ENCODE measurements at regions of chr1 and their contacts with region 1.

Region 1: DNA sequence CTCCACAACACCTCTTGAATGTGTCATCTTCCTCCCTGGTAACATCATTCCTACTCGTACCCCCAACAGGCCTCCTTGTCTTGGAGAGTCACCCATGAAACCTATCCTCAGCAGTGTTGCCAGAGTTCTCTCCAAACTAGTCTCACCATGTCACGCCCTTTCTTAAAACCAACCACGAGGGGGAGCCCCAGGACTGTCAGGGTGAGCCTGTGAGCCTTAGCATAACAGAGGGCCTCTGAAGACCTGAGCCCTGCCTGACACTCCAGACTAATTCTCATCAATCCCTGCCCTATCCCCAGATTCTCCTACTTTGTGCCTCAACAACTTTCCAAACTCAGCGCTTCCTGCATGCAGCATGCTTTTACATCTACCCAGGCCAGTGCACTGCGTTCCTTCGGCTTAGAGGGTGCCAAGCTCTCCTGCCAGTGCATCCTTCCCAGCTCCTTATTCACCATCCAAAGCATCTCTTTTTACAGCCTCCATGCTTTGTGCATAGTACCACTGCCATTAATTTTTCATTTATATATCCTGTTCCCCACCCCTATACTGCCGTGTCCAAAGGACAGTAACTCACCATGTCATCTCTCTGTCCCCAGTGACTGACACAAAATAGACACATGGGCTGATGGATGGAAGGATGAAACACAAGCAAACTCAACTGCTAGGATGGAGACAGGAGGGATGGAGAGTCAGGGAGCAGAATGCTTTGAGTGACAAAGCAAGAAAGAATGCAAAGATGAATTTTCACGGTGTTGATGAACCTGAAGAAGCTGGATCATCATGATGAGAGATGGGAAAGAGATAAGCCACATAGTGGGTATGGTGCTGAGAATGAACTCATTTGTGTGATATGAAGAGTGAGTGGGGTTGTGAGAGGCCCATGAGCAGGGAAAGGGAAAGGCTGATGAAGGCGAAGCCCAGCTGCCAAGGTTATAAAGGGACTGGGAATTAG is 34.0 kb downstream of the ZNF697 start:
- DNase-seq: peak; percentile 86
- H3K4me3 ChIP-seq: no peak overlapping the region
- H3K27ac ChIP-seq: no peak overlapping the region
- H3K4me1 ChIP-seq: no peaks in the 10 kb centered on the region
- H3K27me3 ChIP-seq: no peaks in the 10 kb centered on the region
- CTCF ChIP-seq: peak; percentile 60 to 72
- POLR2A ChIP-seq: no peak

Region 2: GRCh38 chr1:118563971-118564951 is 1049.8 kb before region 1 on chr1:
- CTCF ChIA-PET with region 1: no interaction called
- POLR2A ChIA-PET with region 1: no interaction called
- dilution Hi-C with region 1: no loop called
- intact Hi-C with region 1: no loop called
- DNase-seq: no peak
- H3K4me3 ChIP-seq: no peak overlapping the region
- H3K27ac ChIP-seq: no peak overlapping the region
- H3K4me1 ChIP-seq: no peaks in the 10 kb centered on the region
- H3K27me3 ChIP-seq: no peaks in the 10 kb centered on the region
- CTCF ChIP-seq: no peak
- POLR2A ChIP-seq: no peak

Region 3: GRCh38 chr1:119582801-119583200 is 31.2 kb before region 1 on chr1:
- CTCF ChIA-PET with region 1: interaction called, 7 read pairs
- POLR2A ChIA-PET with region 1: no interaction called
- dilution Hi-C with region 1: no loop called
- intact Hi-C with region 1: loop called (anchors 2 kb)
- DNase-seq: peak; percentile 62
- H3K4me3 ChIP-seq: no peak overlapping the region
- H3K27ac ChIP-seq: no peak overlapping the region
- H3K4me1 ChIP-seq: no peaks in the 10 kb centered on the region
- H3K27me3 ChIP-seq: no peaks in the 10 kb centered on the region
- CTCF ChIP-seq: peak; percentile 54 to 67
- POLR2A ChIP-seq: no peak

Region 4: DNA sequence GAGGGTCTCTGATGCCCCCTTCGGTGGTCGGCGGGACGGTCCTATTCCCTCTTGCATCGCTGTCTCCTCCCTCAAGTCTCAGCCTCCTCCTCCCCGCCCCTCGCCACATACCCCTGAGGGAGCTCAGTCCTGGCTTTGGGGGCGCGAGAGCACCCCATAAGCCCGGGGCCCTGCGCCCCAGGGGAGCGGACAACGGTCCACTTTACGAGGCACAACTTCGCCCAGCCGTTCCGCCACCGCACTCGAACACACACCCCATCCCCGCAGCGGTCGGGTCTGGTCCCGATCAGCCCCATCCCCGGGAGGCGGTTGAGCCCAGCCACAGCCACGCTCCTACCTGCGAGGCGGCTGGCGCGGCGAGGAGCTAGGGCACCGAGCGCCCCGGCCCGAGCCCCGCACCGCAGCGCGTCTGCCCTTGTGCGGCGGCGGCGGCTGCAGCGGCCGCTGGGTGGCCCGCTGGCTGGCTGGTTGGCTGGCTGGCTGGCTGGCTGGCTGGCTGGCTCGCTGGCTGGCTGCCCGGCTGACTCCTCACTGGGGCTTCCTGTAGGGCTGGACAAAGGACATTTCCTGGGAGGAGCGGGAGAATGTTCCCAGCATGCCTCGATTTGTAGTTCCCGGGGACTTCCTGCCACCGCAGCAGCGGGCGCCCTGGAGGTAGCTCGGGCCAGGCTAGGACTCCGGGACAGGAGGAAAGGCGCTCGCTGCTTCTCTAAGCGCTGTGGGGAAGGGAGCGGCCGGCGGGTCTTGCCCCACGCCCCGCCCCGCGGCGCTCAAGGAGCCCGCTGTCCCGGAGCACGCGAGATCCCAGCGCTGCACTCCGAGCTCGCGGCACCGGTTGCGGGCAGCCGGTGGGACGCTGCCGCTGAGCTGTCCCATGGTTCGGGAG is 33.9 kb after region 1 on chr1 and contains the start of gene ZNF697:
- CTCF ChIA-PET with region 1: interaction called, 86 read pairs
- POLR2A ChIA-PET with region 1: interaction called, 11 read pairs
- dilution Hi-C with region 1: no loop called
- intact Hi-C with region 1: loop called (anchors 1 kb)
- DNase-seq: peak; percentile 98
- H3K4me3 ChIP-seq: peak within 1 kb of the TSS; percentile 53 to 99 (median 70)
- H3K27ac ChIP-seq: peak within 1 kb of the TSS; percentile 91
- H3K4me1 ChIP-seq: peaks cover 29% of the 10 kb centered on the region
- H3K27me3 ChIP-seq: peaks cover 0 to 3% of the 10 kb centered on the region in 2 experiments
- CTCF ChIP-seq: peak in 1 of 2 donors; percentile 71
- POLR2A ChIP-seq: peak; percentile 85
- total RNA-seq, gene ZNF697: 14.1 and 15.0 TPM in 2 replicates

Region 5: GRCh38 chr1:119675349-119676345 is 61.6 kb after region 1 on chr1:
- CTCF ChIA-PET with region 1: interaction called, 163 read pairs
- POLR2A ChIA-PET with region 1: interaction called, 4 read pairs
- dilution Hi-C with region 1: no loop called
- intact Hi-C with region 1: loop called (anchors 1 kb)
- DNase-seq: peak; percentile 92
- H3K4me3 ChIP-seq: peak overlapping the region; percentile 32 to 86 (median 66)
- H3K27ac ChIP-seq: peak overlapping the region; percentile 78
- H3K4me1 ChIP-seq: peaks cover 42% of the 10 kb centered on the region
- H3K27me3 ChIP-seq: peaks cover 4 to 6% of the 10 kb centered on the region in 2 experiments
- CTCF ChIP-seq: peak; percentile 64 to 77
- POLR2A ChIP-seq: no peak

Region 6: DNA sequence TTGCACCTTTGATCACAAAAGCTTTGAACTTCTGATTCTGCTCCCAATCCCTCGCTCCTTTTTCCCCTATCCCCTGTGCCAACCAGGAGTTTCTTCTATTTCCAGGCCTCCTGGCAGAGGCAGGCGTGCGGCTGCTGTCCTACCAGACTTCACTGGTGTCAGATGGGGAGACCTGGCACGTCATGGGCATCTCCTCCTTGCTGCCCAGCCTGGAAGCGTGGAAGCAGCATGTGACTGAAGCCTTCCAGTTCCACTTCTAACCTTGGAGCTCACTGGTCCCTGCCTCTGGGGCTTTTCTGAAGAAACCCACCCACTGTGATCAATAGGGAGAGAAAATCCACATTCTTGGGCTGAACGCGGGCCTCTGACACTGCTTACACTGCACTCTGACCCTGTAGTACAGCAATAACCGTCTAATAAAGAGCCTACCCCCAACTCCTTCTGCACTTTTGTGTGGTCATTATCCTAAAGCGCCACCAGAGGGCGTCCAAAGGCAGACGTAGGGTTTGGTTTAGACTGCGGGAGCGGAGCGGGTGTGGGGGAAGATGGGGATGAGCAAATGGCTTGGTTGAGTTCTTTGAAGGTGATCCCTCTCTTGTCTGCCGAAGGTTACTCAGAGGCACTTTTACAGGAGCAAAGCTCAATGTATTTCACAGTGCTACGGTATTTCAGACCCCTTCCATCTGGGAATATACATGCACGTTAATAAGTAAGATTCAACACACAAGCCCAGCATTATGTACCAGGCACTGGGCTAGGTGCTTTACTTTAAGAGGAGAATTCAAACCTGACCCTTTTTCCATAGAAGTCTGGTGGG is 129.9 kb after region 1 on chr1:
- CTCF ChIA-PET with region 1: interaction called, 7 read pairs
- POLR2A ChIA-PET with region 1: interaction called, 3 read pairs
- dilution Hi-C with region 1: no loop called
- intact Hi-C with region 1: loop called (anchors 2 kb)
- DNase-seq: peak; percentile 60
- H3K4me3 ChIP-seq: no peak overlapping the region
- H3K27ac ChIP-seq: no peak overlapping the region
- H3K4me1 ChIP-seq: no peaks in the 10 kb centered on the region
- H3K27me3 ChIP-seq: peaks cover 0 to 2% of the 10 kb centered on the region in 2 experiments
- CTCF ChIP-seq: peak; percentile 83 to 85
- POLR2A ChIP-seq: no peak

Region 7: GRCh38 chr1:119870917-119871596 is 257.0 kb after region 1 on chr1:
- CTCF ChIA-PET with region 1: interaction called, 4 read pairs
- POLR2A ChIA-PET with region 1: no interaction called
- dilution Hi-C with region 1: no loop called
- intact Hi-C with region 1: loop called (anchors 10 kb)
- DNase-seq: peak; percentile 72
- H3K4me3 ChIP-seq: no peak overlapping the region
- H3K27ac ChIP-seq: no peak overlapping the region
- H3K4me1 ChIP-seq: no peaks in the 10 kb centered on the region
- H3K27me3 ChIP-seq: peaks cover under 1 to 6% of the 10 kb centered on the region in 2 experiments
- CTCF ChIP-seq: peak; percentile 92 to 94
- POLR2A ChIP-seq: no peak

Measured in endothelial cell of umbilical vein (primary cell).